ENCODE measurements at regions of chr1 and their contacts with region 1.

Region 1: DNA sequence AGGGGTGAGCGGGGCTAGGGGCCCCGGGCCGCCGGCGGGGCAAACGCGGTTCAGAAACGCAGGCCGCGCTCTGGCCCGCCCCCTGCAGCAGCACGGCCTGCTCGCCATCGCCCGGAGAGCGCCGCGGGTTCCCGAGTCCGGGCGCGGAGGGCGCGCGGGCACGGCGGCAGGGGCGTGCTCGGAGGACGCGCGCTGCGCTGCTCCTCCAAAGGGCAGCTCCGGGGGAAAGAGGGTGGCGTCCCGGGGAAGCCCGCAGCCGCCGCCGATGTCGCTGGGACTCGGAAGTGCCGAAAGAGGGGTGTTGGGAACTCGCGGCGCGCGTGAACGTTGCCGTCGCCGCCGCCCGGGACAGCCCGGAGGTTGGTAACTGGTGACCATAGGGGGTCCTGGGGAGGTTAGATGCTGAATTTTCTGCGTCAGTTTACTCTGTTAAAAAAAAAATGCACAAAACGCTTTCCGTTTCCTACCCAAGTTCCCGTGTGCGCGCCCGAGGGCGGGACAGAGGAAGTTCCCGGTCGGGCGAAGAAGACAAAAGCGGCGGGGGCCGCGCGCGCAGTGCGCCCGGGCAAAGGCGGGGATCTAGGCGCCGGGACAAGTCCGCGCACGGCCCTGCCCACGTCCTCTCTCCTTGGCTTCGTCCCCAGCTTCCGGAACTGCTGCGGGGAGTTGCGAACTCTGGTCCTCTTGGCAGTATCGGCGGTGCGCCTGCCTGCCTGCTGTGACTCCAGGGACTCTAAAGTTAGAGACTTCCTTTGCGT is at the start of gene HHAT:
- DNase-seq: no peak
- H3K4me3 ChIP-seq: peak within 1 kb of the TSS; percentile 55 to 80 (median 80)
- H3K27ac ChIP-seq: peak within 1 kb of the TSS; percentile 77
- H3K4me1 ChIP-seq: peaks cover 30% of the 10 kb centered on the region
- H3K27me3 ChIP-seq: no peaks in the 10 kb centered on the region
- CTCF ChIP-seq: no peak
- polyA plus RNA-seq, gene HHAT: 3.4 to 4.7 TPM (median 3.8 TPM) in 3 replicates

Region 2: DNA sequence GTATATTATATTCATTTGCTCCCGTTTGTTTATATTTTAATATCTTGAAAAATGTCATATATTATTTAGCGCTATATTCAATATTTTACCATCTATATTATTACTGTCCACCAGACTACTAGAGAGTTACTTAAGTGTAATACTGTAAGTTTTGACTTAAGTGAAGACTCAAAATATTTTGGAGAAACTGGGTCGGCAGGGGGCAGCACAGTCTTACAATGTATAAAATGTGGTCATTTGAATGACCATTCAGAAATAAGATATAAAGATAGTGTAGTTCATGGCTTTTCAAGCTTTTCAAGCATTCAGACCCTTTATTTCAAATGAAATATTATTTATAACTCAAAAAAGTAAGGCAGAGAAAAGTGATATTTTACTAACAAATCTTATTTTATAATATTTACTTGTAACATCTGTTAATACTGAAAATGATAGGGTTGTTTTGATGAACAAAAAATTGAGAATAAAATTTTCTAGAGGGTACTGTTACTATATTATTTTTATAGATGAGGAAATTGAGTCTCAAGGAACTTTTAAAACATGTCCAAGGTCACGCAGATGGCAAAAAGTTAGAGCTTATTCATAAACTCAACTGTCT is 185.4 kb before region 1 on chr1:
- dilution Hi-C with region 1: loop called (anchors 25 kb)
- DNase-seq: peak; percentile 9
- H3K4me3 ChIP-seq: no peak overlapping the region
- H3K27ac ChIP-seq: no peak overlapping the region
- H3K4me1 ChIP-seq: peaks cover 7% of the 10 kb centered on the region
- H3K27me3 ChIP-seq: no peaks in the 10 kb centered on the region
- CTCF ChIP-seq: peak in 2 of 3 experiments; percentile 30 to 45

Region 3: DNA sequence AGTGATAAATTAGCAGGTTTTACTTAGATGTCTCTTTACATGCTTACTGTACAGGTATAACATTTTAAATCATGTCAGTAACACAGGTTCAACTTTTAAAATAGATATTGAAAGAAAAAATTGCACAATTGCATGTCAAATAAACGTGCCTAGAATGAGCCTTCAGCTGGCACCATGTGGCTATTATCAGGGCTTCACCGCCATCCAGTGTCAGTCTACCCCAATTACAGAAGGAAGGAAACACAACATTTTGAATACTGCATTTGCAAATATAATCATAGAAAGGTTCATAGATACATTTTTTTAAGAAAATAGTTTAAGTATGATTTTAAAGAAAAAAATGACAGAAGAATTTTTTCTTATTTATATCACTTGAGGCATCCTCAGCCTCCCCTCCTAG is 143.9 kb before region 1 on chr1:
- dilution Hi-C with region 1: no loop called
- DNase-seq: no peak
- H3K4me3 ChIP-seq: no peak overlapping the region
- H3K27ac ChIP-seq: no peak overlapping the region
- H3K4me1 ChIP-seq: peaks cover 11% of the 10 kb centered on the region
- H3K27me3 ChIP-seq: no peaks in the 10 kb centered on the region
- CTCF ChIP-seq: peak in 1 of 3 experiments; percentile 19

Region 4: GRCh38 chr1:210373885-210374599 is 45.1 kb after region 1 on chr1:
- dilution Hi-C with region 1: no loop called
- DNase-seq: peak; percentile 92
- H3K4me3 ChIP-seq: no peak overlapping the region
- H3K27ac ChIP-seq: peak overlapping the region; percentile 99
- H3K4me1 ChIP-seq: peaks cover 14% of the 10 kb centered on the region
- H3K27me3 ChIP-seq: no peaks in the 10 kb centered on the region
- CTCF ChIP-seq: peak; percentile 93 to 99 (median 94)

Region 5: DNA sequence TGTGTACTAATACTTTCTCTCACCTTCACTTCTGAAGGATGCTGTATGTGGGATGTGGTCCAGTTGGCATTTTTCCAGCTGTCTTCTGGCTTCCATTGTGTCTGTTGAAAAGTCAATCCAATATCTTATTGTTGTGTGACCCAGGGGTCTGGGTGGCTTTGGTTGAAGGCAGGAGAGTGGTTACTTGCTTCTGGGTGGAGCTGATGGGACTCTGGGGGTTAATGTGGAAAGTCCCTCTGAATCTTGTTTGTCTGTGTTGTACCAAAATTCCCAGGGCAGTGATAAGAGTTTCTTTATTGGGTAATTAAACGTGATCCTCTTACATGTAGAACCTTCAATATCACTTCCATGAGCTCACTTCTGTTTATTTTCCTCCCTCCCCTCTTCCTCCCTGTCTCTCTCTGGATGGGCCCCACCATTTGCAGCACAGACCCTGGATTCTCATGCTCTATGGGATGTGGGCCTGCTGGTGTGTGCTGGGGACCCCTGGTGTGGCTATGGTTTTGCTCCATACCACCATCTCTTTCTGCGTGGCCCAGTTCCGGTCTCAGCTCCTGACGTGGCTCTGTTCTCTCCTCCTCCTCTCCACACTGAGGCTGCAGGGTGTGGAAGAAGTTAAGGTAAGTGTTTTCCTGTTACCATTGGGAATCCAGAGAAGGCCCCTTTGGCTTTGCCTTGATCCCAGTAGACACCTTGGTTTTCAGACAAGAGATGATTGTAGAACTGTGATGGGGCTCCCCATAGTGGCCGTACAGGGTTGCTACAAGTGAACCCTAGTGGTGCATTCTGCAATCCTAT is 71.3 kb after region 1 on chr1:
- dilution Hi-C with region 1: no loop called
- DNase-seq: peak; percentile 32
- H3K4me3 ChIP-seq: no peak overlapping the region
- H3K27ac ChIP-seq: no peak overlapping the region
- H3K4me1 ChIP-seq: peaks cover 12% of the 10 kb centered on the region
- H3K27me3 ChIP-seq: peaks cover 11% of the 10 kb centered on the region
- CTCF ChIP-seq: peak; percentile 88 to 97 (median 91)

Region 6: GRCh38 chr1:210464519-210465039 is 135.7 kb after region 1 on chr1:
- dilution Hi-C with region 1: no loop called
- DNase-seq: no peak
- H3K4me3 ChIP-seq: no peak overlapping the region
- H3K27ac ChIP-seq: no peak overlapping the region
- H3K4me1 ChIP-seq: no peaks in the 10 kb centered on the region
- H3K27me3 ChIP-seq: no peaks in the 10 kb centered on the region
- CTCF ChIP-seq: no peak

Measured in keratinocyte (primary cell).